ENCODE measurements at regions of chr5 and their contacts with region 1.

Region 1: DNA sequence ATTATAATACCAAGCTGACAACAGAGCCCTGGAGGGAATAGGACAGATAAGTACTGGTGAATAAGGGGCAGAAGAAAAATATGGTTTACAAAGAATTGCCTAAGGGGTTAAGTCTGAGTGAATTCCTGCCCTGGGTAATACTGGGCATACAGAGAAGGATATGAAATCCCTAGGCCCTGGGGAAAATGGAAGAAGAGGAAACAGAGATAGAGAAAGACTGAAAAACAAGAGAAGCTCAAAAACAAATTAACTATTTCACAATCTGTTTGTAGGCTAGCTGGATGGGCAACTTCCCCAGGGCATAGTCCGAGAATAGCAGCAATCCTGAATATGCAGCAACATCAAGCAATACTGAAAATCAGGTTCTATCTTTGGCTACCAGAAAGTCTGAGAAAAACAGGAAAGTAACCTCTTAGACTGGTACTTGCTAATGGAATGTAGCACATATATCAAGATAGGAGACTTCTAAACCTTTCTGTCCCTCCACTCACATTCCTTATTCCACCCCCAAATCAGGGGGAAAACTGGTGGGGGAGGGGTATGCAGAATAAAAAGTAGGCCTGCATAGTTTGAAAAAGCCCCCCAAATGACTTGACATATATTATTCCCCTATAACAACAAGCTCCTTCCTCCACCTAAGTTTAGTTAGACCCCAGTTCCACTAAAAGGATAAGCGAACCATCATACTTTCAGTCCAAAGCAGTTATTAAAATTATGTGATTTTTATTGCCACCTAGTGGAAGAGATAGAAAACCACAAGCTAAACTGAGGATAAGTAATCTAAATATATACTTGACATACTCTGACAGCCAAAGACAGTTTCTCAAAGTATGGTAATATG is 20.6 kb downstream of the SLC38A9 start:
- H3K4me3 ChIP-seq: no peak overlapping the region
- H3K27ac ChIP-seq: no peak overlapping the region
- H3K4me1 ChIP-seq: no peaks in the 10 kb centered on the region
- CTCF ChIP-seq: no peak

Region 2: GRCh38 chr5:55324016-55324415 is 367.5 kb before region 1 on chr5:
- CTCF ChIA-PET with region 1: interaction called, 10 read pairs
- POLR2A ChIA-PET with region 1: no interaction called
- H3K4me3 ChIP-seq: no peak overlapping the region
- H3K27ac ChIP-seq: no peak overlapping the region
- H3K4me1 ChIP-seq: no peaks in the 10 kb centered on the region
- CTCF ChIP-seq: no peak

Region 3: GRCh38 chr5:55407059-55407684 is 284.3 kb before region 1 on chr5:
- CTCF ChIA-PET with region 1: interaction called, 12 read pairs
- POLR2A ChIA-PET with region 1: no interaction called
- H3K4me3 ChIP-seq: no peak overlapping the region
- H3K27ac ChIP-seq: no peak overlapping the region
- H3K4me1 ChIP-seq: no peaks in the 10 kb centered on the region
- CTCF ChIP-seq: no peak; the same call in 1 of the 2 replicates

Region 4: DNA sequence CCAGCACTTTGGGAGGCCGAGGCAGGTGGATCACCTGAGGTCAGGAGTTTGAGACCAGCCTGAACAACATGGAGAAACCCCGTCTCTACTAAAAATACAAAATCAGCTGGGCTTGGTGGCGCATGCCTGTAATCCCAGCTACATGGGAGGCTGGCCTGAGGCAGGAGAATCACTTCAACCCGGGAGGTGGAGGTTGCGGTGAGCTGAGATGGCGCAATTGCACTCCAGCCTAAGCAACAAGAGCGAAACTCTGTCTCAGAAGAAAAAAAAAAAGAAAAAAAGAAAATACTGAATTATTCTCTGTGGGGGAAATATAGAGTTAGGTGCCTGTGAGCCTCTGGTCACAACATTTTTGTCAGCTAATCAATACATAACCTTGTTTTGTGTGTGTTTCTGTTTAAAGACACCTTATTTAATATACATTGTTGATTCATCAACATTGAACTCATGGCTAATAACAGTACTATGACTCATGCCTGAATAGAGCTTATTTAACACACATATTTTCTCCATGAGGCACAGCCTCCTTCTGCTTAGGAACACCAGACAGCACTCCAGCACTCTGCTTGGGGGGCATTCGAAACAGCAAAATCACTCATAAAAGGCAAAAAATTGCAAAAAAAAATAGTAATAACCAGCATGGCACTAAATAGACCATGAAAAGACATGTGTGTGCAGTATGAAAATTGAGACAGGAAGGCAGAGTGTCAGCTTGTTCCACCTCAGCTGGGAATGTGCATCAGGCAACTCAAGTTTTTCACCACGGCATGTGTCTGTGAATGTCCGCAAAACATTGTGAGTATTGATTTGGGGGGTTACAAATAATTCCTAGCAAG is 159.6 kb after region 1 on chr5 and contains the start of gene IL31RA:
- CTCF ChIA-PET with region 1: no interaction called
- POLR2A ChIA-PET with region 1: no interaction called
- H3K4me3 ChIP-seq: peak within 1 kb of the TSS; percentile 27
- H3K27ac ChIP-seq: no peak within 1 kb of the TSS
- H3K4me1 ChIP-seq: no peaks in the 10 kb centered on the region
- CTCF ChIP-seq: no peak

Region 5: GRCh38 chr5:55973296-55973695 is 281.8 kb after region 1 on chr5:
- CTCF ChIA-PET with region 1: no interaction called
- POLR2A ChIA-PET with region 1: no interaction called
- H3K4me3 ChIP-seq: no peak overlapping the region
- H3K27ac ChIP-seq: no peak overlapping the region
- H3K4me1 ChIP-seq: no peaks in the 10 kb centered on the region
- CTCF ChIP-seq: no peak